Left colon (tissue), 2 donors: ENCODE measurements at regions of chr11 and their contacts with region 1.

Region 1: DNA sequence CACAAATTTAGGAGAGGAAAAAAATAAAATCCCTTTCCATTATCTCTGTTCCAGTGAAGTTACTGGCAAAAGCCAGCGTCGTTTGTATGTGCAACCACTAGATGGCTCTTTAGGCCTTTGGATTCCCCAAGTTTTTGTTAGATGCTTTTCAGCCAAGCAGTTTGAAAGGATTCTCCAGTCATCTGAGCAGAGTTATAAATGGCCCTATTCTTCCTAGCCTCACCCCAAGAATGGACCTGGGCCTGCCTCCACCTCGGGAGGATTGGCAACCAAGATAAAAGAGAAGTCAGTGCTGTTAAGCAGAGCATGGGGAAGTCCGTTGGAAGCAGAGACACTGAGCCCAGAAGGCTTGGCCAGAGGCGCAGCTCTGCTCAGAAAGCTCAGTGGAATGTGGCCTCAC is 15.4 kb downstream of the FAM181B start:
- DNase-seq: peak in 1 of 2 donors; percentile 16
- ATAC-seq: peak; percentile 61

Region 2: DNA sequence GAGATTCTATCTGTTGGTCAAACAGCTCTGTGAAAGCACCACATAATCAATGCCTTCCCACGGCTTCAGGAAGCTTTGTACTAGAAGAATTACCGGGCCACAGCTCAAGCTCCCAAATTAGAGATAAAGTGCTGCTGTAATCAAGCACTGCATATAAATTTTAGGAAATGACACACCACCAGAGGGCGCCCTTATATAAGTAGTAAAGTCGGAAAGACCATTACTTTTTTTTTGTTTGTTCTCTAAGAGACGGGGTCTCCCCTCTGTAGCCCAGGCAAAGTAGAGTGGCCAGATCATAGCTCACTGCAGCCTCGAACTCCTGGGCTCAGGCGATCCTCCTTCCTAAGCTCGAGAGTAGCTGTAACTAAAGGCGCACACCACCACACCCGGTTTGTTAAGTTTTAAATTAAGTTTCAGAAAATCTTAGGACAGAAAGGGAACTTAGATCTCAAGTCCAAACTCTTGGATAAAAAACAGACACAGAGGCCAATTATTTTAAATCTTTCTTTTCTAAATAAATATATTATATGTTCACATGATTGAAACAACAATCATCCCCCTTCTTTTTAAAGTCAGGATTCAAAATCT is 149.3 kb after region 1 on chr11:
- intact Hi-C with region 1: loop called in 1 of 2 experiments (anchors 10 kb)
- DNase-seq: peak; percentile 41 to 90
- ATAC-seq: peak; percentile 45